Mammary epithelial cell (primary cell): ENCODE measurements at regions of chr17 and their contacts with region 1.

Region 1: DNA sequence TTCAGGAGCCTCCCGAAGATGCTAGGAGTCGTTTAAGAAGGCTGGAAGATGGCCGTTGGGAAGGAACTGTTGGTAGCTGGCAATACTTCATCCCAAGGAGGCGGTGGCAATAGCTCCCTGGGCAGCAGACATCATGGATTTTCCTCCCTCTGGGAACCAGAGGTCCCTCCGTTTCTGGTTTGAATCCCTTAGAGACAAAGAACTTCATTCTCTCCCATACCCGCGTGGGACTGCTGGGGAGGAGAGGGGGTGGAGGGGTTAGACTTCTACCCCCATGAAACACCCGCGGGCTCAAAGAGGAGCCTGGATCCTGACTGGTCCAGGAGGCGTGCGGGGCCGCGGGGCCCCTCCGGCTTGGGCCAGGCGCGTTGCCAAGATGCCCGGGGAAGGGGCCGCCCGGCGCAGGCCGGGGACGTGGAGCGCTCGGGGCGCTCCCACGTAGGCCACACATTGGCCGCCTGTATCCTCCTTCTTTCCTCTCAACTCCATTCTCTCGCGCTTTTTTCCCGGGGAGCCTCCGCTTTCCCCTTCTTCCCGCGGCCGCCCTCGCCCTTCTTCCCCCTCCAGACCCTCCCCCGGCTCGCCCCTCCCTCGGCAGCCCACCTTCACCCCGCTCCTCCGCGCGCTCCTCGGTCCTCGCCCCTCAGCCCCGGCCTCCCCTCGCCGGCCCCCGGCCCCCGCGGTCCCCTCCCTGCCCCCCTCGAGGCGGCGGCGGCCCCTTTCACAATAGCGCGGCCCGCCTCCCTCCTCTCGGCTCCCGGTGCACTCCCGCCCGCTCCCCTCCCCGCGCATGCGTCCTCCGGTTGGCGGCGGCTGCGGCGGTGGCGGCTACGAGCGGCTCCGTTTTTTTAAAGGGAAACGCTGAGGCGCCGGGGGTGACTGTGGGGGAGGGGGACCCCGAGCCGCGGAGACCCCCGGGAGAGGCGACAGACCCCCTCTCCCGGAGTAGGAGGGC is at the start of gene MSL1:
- DNase-seq: peak; percentile 72
- H3K4me3 ChIP-seq: peak within 1 kb of the TSS; percentile 65 to 87 (median 75)
- H3K27ac ChIP-seq: peak within 1 kb of the TSS; percentile 68
- H3K4me1 ChIP-seq: peaks cover 6% of the 10 kb centered on the region
- H3K27me3 ChIP-seq: no peaks in the 10 kb centered on the region
- CTCF ChIP-seq: no peak
- total RNA-seq, gene MSL1: 36.8 to 72.1 TPM

Region 2: DNA sequence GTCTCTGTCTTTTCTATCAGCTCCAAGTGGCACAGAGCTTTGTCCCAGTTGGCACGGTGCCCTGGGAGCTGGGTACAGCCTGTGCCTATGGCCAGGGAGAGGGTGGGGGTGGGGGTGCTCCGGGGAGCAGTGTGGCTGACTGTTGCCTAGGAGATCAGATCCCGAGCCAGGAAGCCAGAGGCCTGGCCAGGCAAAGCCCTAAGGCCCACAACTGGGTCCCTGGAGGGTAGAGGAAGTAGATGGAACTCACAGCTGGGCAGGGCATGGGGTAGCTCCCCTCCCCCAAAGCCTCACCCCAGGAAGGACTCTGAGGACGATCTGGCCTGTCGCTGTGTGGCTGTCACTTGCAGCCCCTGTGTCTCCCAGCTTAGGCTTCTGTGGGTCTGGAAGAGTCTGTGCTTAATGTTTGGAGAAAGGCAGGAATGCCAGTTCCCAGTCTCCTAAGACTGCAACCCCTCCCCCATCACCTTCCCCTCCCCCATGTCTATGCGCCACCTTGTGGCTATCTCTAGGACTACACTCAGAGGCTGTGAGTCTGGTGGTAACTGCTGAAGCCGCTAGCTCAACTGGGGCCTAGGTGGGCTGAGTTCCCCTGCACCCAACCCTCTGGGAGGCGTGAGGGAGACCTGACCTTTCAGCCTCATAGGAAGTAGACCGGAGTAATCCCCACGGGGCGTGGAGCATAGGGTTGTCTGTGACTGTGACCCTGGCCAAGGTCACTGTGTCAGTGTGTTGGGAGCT is 46.1 kb before region 1 on chr17:
- CTCF ChIA-PET with region 1: interaction called, 20 read pairs
- dilution Hi-C with region 1: no loop called
- in situ Hi-C with region 1: no loop called
- intact Hi-C with region 1: no loop called
- DNase-seq: peak; percentile 30
- H3K4me3 ChIP-seq: no peak overlapping the region
- H3K27ac ChIP-seq: no peak overlapping the region
- H3K4me1 ChIP-seq: peaks cover 31% of the 10 kb centered on the region
- H3K27me3 ChIP-seq: no peaks in the 10 kb centered on the region
- CTCF ChIP-seq: peak; percentile 77 to 94

Region 3: GRCh38 chr17:40139566-40140058 is 18.2 kb after region 1 on chr17:
- CTCF ChIA-PET with region 1: no interaction called
- dilution Hi-C with region 1: no loop called
- in situ Hi-C with region 1: no loop called
- intact Hi-C with region 1: loop called (anchors 1 kb)
- DNase-seq: no peak
- H3K4me3 ChIP-seq: peak overlapping the region; percentile 55 to 63 (median 55)
- H3K27ac ChIP-seq: peak overlapping the region; percentile 73
- H3K4me1 ChIP-seq: peaks cover 17% of the 10 kb centered on the region
- H3K27me3 ChIP-seq: no peaks in the 10 kb centered on the region
- CTCF ChIP-seq: no peak

Region 4: DNA sequence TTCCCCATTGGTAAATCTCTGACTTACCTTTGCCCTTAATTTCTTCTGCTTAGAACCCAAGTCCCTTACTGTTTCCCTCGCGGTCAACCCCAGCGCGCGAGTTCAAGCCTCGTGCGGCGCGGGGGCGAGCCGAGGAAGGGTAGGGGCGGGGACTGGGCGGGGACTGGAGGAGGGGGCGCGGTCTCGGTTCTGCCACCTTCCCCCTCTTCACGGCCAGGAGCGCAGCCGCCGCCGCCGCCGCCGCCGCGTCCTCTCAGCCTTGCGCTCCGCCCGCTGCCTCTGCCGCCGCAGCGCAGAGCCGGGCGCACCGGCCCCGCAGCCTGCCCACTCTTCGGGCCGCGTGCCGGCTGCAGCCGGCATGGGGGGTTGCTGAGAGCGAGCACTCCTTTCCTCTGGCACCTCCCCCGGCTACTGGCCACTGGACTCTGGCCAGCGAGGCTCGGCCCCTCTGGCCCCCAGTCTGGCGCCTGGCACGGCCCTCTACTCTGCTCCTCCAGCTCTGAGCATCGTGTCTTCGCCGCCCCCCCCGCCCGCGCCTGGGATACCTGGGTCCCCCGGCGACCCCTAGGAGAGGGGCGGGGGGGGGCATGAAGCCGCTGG is 55.9 kb after region 1 on chr17 and contains the start of gene RAPGEFL1:
- CTCF ChIA-PET with region 1: interaction called, 8 read pairs
- dilution Hi-C with region 1: loop called (anchors 10 kb)
- in situ Hi-C with region 1: no loop called
- intact Hi-C with region 1: loop called (anchors 2 kb)
- DNase-seq: peak; percentile 73
- H3K4me3 ChIP-seq: peak within 1 kb of the TSS; percentile 60 to 80 (median 65)
- H3K27ac ChIP-seq: peak within 1 kb of the TSS; percentile 85
- H3K4me1 ChIP-seq: peaks cover 47% of the 10 kb centered on the region
- H3K27me3 ChIP-seq: no peaks in the 10 kb centered on the region
- CTCF ChIP-seq: no peak
- total RNA-seq, gene RAPGEFL1: 19.7 to 25.2 TPM